ENCODE measurements at regions of chr20 and their contacts with region 1.

Region 1: DNA sequence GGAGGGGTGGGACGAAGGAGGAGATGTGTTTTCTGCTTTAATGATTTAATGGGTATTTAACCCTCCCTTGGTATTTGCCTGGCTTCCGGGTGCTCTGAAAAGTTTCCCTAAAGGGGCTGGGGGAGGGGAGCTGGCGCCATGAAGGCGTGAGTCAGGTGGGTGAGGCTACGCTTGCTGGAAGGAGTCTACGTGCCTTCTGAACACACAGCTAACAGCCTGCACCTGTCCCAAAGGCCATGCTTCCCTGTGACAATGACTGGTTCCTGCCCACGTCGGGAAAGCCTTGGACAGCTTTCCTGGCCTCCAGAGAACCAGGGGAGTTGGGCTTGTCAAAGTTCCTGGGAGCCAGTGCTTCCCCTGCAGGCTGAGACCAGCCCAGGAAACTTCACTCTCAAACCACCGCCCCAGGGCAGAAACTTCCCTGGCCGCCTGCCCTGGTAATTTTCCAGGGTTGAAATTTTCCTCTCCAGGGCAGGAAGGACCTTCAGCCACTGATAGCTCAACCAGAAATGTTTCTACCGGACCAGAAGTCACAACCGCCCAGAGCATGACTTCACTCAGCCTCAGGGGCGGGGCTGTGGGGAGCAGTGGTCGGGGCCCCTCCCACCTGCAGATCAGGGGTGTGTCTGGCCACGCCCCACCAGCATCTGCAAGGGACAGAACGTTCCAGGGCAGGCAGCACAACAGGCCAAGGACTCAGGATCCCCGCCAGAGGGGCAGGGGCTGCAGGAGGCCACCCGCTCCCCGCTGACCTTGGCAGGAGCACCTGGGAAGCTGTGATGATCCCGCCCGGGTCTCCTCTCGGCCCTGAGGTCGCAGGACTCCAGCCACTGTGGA is 18.6 kb upstream of the SLCO4A1 start:
- DNase-seq: peak; percentile 92
- H3K4me3 Mint-ChIP-seq: peak overlapping the region; percentile 67
- H3K27ac Mint-ChIP-seq: peak overlapping the region; percentile 95
- H3K4me1 Mint-ChIP-seq: peaks cover 38% of the 10 kb centered on the region
- H3K27me3 Mint-ChIP-seq: no peaks in the 10 kb centered on the region

Region 2: DNA sequence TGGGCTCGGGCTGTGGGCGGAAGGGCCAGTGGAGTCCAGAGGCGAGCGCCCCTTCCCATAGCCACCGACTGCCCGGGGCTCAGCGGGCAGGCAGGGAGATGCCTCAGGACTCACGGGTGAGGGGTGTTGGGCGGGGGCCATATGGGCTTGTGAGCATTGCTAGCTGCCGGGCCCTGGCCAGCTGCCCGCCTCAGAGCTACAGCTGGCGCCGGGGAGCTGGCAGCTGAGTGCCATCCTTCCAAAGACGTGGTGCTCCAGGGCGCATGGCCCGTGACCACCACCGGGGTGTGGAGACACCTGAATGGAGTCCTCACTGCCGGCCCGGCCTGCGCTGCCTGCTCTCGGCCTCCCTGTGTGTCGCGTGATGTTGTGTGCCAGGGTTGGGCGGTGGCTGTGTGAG is 185.8 kb before region 1 on chr20:
- CTCF ChIA-PET with region 1: no interaction called
- POLR2A ChIA-PET with region 1: no interaction called
- DNase-seq: no peak
- H3K4me3 Mint-ChIP-seq: no peak overlapping the region
- H3K27ac Mint-ChIP-seq: no peak overlapping the region
- H3K4me1 Mint-ChIP-seq: no peaks in the 10 kb centered on the region
- H3K27me3 Mint-ChIP-seq: peaks cover 20% of the 10 kb centered on the region

Region 3: GRCh38 chr20:62583420-62583920 is 40.2 kb before region 1 on chr20:
- CTCF ChIA-PET with region 1: no interaction called
- POLR2A ChIA-PET with region 1: no interaction called
- DNase-seq: no peak
- H3K4me3 Mint-ChIP-seq: no peak overlapping the region
- H3K27ac Mint-ChIP-seq: no peak overlapping the region
- H3K4me1 Mint-ChIP-seq: no peaks in the 10 kb centered on the region
- H3K27me3 Mint-ChIP-seq: peaks cover 38% of the 10 kb centered on the region

Region 4: GRCh38 chr20:62636446-62636845 is 12.7 kb after region 1 on chr20:
- CTCF ChIA-PET with region 1: interaction called, 13 read pairs
- POLR2A ChIA-PET with region 1: no interaction called
- DNase-seq: peak; percentile 44
- H3K4me3 Mint-ChIP-seq: no peak overlapping the region
- H3K27ac Mint-ChIP-seq: peak overlapping the region; percentile 57
- H3K4me1 Mint-ChIP-seq: peaks cover 32% of the 10 kb centered on the region
- H3K27me3 Mint-ChIP-seq: peaks cover 37% of the 10 kb centered on the region

Region 5: GRCh38 chr20:62658593-62659178 is 35.0 kb after region 1 on chr20:
- CTCF ChIA-PET with region 1: no interaction called
- POLR2A ChIA-PET with region 1: no interaction called
- DNase-seq: no peak
- H3K4me3 Mint-ChIP-seq: no peak overlapping the region
- H3K27ac Mint-ChIP-seq: peak overlapping the region; percentile 58
- H3K4me1 Mint-ChIP-seq: peaks cover 11% of the 10 kb centered on the region
- H3K27me3 Mint-ChIP-seq: no peaks in the 10 kb centered on the region

Measured in activated CD4-positive, alpha-beta T cell treated with anti-CD3 and anti-CD28 coated beads, Interleukin-2, amount 10 ng/mL, durations not matched to agents 7 days and 5 days (primary cell).